ENCODE measurements at regions of chr11 and their contacts with region 1.

Region 1: GRCh38 chr11:65180877-65181568 is 705 bp upstream of the CAPN1 start:
- DNase-seq: peak; percentile 86
- ATAC-seq: peak; percentile 60
- H3K4me3 Mint-ChIP-seq: peak overlapping the region; percentile 83
- H3K27ac Mint-ChIP-seq: peak overlapping the region; percentile 63; the same call in 1 of the 2 replicates
- H3K4me1 Mint-ChIP-seq: peaks cover 40% of the 10 kb centered on the region
- H3K27me3 Mint-ChIP-seq: no peaks in the 10 kb centered on the region
- CTCF ChIP-seq: peak; percentile 72

Region 2: DNA sequence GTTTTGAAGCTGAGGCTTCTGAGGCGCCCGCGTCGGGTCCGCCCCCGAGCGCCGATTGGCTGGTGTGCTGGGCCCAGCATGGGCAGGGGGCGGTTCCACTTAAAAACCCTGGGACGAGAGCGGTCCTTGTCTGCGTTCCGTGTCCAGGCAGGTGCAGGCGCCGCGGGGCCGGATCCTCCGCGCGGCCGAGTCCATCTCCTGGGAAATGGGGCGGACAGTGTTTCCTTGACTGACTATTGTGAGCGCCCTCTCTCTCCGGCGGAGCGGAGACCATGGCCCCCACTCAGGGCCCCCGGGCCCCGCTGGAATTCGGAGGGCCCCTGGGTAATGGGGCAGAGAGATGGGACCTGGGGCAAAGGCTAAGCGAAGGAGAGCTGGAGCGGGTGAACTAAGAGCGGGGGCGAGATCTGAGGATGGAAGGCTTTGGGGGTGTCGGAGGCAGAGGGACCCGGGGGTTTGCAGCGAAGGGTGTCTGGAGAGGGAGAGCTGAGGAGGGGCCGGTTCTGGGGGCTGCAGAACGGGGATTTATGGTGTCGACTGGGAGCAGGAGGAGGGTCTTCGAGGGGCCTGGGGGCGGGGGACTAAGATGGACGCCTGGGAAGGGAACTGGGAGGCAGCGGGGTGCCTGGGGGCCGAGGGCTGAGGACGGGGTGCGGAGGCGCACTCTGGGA is 69.1 kb before region 1 on chr11 and contains the start of gene TM7SF2:
- CTCF ChIA-PET with region 1: interaction called, 53 read pairs
- POLR2A ChIA-PET with region 1: interaction called, 11 read pairs
- DNase-seq: peak; percentile 97
- ATAC-seq: peak; percentile 77
- H3K4me3 Mint-ChIP-seq: peak within 1 kb of the TSS; percentile 91
- H3K27ac Mint-ChIP-seq: peak within 1 kb of the TSS; percentile 89
- H3K4me1 Mint-ChIP-seq: peaks cover 17% of the 10 kb centered on the region
- H3K27me3 Mint-ChIP-seq: no peaks in the 10 kb centered on the region
- CTCF ChIP-seq: no peak
- total RNA-seq, gene TM7SF2: 63.8 to 74.9 TPM (median 71.5 TPM) in 3 replicates

Region 3: DNA sequence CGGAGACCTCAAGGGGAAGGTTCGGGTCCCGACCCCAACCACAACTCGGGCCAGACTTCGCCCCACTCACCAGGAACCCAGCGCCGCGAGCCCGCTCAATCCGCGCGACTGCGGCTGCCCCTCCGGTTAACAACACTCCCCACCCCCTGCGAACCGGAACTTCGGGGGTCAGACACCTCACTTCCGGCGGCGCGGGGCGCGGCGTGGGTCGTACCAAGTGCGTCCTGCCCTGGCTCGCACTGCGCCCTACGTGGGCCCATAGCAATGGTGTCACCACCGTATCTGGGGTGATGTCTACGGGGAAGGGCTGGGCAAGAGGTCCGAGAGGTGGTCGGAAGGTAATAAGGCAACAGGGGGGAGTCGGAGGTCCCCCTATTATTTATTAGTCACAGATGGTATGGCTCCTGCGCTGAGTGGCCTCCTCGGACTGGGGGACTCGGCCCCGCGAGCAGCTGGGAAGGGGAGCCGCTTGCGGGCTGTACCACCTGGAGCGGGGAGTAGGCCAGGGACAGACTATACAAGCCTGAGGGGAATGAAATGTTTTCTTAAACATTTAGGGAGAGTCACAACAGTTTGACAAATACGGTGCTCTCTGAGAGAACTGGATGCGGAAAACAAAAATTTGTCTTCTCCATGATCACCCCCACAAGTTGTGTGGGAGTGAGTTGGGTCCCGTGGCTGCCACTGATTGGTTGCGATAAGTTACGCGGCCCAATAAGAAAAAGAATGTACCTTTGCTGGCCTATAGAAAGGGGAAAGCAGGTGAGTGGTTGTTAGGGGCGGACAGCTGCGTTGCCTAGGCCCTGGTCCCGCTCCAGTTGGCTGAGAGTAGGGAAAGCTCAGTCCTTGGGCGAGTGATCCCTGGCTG is 46.4 kb before region 1 on chr11 and contains the start of gene SYVN1:
- CTCF ChIA-PET with region 1: interaction called, 35 read pairs
- POLR2A ChIA-PET with region 1: interaction called, 20 read pairs
- DNase-seq: peak; percentile 90
- ATAC-seq: peak; percentile 92
- H3K4me3 Mint-ChIP-seq: peak within 1 kb of the TSS; percentile 98
- H3K27ac Mint-ChIP-seq: peak within 1 kb of the TSS; percentile 100
- H3K4me1 Mint-ChIP-seq: peaks cover 18% of the 10 kb centered on the region
- H3K27me3 Mint-ChIP-seq: no peaks in the 10 kb centered on the region; the same call in 1 of the 2 replicates
- CTCF ChIP-seq: no peak
- total RNA-seq, gene SYVN1: 27.6 to 34.8 TPM (median 31.8 TPM) in 3 replicates

Region 4: DNA sequence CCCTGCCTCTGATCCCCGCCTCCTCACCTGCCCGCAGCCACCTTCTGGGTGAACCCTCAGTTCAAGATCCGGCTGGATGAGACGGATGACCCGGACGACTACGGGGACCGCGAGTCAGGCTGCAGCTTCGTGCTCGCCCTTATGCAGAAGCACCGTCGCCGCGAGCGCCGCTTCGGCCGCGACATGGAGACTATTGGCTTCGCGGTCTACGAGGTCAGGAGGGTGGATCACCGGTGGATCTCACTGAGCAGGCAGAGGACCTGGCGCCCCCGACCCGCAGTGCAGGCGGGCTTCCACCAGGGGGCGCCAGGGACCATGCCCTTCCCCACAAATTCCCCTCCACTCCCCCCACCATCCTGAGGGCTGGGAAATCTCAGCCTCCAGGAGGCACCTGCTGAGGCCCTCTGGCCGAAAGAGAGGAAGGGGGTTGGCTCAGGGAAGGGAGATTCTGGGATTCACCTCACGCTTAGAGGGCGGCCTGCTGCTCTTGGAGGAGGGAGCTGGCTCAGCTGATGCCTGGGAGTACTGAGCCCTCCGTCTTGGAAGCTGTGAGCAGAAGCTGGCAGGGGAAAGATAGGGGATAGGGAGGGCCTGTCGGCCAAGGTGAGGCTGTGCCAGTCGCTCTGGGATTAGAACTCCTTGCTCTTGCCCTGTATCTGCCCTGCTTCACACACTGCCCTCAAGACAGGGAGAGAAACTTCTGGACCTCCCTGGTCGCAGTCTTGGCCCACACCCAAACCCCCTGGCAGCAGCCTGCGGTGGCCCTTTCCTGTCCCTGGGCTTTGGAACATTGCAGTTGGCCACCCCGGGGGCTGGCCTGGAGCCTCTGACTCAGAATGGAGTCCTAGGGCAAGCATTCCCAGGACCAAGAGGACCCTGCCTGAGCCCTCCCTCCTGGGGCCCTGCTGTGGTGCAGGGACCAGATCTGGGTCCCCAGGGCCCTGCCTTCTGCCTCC is 23.9 kb after region 1 on chr11:
- CTCF ChIA-PET with region 1: interaction called, 23 read pairs
- POLR2A ChIA-PET with region 1: interaction called, 3 read pairs
- DNase-seq: peak; percentile 88
- ATAC-seq: peak; percentile 93
- H3K4me3 Mint-ChIP-seq: peak overlapping the region; percentile 60
- H3K27ac Mint-ChIP-seq: peak overlapping the region; percentile 93
- H3K4me1 Mint-ChIP-seq: peaks cover 16% of the 10 kb centered on the region
- H3K27me3 Mint-ChIP-seq: no peaks in the 10 kb centered on the region
- CTCF ChIP-seq: peak; percentile 99

Region 5: GRCh38 chr11:65225279-65226102 is 44.5 kb after region 1 on chr11:
- CTCF ChIA-PET with region 1: interaction called, 16 read pairs
- POLR2A ChIA-PET with region 1: no interaction called
- DNase-seq: peak; percentile 73
- ATAC-seq: peak; percentile 87
- H3K4me3 Mint-ChIP-seq: peak overlapping the region; percentile 81
- H3K27ac Mint-ChIP-seq: peak overlapping the region; percentile 53
- H3K4me1 Mint-ChIP-seq: peaks cover 19% of the 10 kb centered on the region
- H3K27me3 Mint-ChIP-seq: no peaks in the 10 kb centered on the region; the same call in 1 of the 2 replicates
- CTCF ChIP-seq: no peak

Region 6: DNA sequence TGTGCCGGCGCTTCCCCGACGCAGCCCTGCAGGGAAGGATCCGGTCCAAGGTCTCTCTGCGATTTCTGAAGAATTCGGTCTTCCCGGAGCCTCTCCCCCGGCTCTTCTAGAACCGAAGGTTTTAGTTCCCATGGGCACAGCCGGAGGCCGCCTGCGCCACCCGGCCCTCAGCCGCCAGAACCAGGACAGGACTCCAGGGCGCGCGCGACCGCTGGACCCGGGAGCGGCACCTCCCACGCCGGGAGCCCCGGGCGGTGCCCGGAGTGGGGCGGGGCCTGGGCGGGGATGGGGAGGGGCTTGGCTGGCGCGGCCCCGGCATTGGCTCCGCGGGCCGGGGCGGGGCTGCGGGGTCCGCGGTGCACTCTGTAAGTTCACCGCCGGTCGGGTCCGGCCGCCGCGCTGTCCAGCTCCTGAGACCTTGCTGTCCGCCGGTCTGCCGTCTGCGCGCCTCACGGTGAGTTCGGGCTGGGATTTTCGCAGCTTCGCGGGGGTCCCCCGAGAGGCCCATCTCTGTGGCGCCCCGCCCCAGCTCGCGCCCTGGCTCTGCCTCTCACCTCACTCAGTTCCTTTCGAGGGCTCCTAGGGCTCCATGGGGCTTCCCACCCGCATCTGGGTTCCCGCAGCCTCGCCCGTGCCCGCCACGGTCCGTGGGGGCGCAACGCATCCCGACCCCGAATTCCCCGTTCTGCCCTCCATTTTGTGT is 133.6 kb after region 1 on chr11 and contains the start of gene CDC42EP2:
- CTCF ChIA-PET with region 1: interaction called, 14 read pairs
- POLR2A ChIA-PET with region 1: no interaction called
- DNase-seq: peak; percentile 87
- ATAC-seq: peak; percentile 78
- H3K4me3 Mint-ChIP-seq: peak within 1 kb of the TSS; percentile 71
- H3K27ac Mint-ChIP-seq: no peak within 1 kb of the TSS
- H3K4me1 Mint-ChIP-seq: peaks cover 39% of the 10 kb centered on the region
- H3K27me3 Mint-ChIP-seq: peaks cover 35% of the 10 kb centered on the region
- CTCF ChIP-seq: no peak
- total RNA-seq, gene CDC42EP2: 11.0 to 15.2 TPM (median 11.5 TPM) in 3 replicates